Sciatic nerve (tissue), 2 donors: ENCODE measurements at regions of chr20 and their contacts with region 1.

Region 1: DNA sequence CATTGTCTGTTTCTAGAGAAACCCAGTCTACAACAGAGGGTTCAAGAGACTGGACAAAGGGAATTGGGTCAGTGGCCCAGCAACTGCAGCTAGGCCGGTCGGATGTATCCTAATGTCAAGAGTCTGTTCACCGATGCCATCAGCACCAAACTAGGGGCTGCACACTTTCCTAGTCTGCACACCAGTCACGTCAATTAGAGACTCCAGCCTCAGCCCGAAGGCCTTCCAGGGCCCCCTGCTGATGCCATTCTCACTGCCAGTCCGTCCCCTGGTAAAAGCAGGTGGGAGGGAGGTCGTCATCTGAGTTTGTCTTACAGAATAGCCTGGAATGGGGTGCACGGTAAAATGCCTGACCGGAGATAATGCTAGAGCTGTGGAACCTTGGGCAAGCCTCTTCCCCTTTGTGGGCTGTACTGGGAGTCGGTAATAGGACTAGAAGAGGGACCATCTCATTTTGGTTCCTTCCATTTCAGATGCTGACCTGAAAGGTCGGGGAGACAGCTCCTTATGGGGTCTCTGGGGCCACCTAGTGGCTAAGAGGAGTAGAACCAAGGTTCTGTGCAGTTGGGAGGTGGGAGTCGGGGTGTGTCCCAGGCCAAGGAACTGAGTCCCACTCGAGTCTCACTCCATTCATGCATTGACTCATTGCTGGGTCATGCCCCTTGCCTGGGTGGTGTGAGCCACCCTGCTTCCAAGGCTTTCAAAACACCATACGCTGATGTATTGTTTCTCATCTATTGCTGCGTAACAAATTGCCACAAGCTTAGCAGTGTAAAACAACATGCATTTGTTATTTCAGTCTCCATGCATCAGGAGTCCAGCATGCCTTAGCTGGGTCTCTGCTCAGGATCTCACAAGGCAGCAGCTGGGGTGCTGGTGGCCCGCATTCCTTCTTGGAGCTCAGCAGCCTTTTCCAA is 5.1 kb downstream of the SOX12 start:
- DNase-seq: no peak
- ATAC-seq: peak; percentile 39

Region 2: GRCh38 chr20:278607-279571 is 51.6 kb before region 1 on chr20:
- intact Hi-C with region 1: loop called (anchors 10 kb)
- DNase-seq: peak; percentile 85
- ATAC-seq: peak; percentile 79